Right ventricle myocardium inferior (tissue), 1 donor: ENCODE measurements at regions of chr1 and their contacts with region 1.

Region 1: DNA sequence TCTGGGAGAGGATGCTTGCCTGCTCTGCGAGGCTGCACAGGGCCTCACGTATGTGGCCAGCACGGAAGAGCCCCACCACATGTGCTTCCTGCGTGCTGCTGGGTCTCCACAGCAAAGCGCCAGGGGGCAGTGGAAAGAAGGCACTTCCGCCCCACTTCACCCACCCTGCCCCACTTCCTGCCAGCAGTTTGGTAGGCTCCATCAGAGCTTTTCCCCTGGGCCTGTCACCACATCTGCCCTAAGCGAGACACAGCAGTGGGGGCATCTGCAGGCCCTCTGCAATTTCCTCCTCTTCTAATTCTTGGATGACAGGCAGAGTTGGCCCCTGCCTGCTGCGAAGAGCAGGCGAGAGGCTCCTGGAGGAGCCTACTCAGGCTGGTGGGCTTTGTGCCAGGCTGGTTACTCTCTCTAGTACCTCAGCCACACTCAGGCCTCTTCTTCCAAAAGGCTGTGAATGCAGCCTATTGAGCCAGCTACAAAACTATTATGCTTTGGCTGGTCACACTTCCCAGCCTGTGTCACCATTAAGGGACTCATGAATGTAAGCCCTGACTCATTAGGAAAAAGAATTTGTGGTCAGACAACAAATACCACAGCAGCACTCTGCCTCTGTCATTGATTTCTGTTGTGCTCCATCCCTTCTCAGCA is 25.0 kb downstream of the CD244 start:
- DNase-seq: no peak
- ATAC-seq: peak; percentile 46

Region 2: GRCh38 chr1:160748181-160748877 is 89.4 kb before region 1 on chr1:
- intact Hi-C with region 1: no loop called
- DNase-seq: no peak
- ATAC-seq: no peak

Region 3: GRCh38 chr1:160862203-160863060 is 24.8 kb after region 1 on chr1 and contains the start of gene CD244:
- intact Hi-C with region 1: no loop called
- DNase-seq: peak; percentile 75
- ATAC-seq: peak; percentile 63
- total RNA-seq, gene CD244: 0.70 TPM

Region 4: GRCh38 chr1:160951443-160952128 is 113.9 kb after region 1 on chr1:
- intact Hi-C with region 1: loop called (anchors 1 kb)
- DNase-seq: no peak
- ATAC-seq: peak; percentile 76

Region 5: GRCh38 chr1:160997323-160998038 is 159.8 kb after region 1 on chr1:
- intact Hi-C with region 1: loop called (anchors 5 kb)
- DNase-seq: no peak
- ATAC-seq: peak; percentile 84